Sciatic nerve (tissue), 2 donors: ENCODE measurements at regions of chr18 and their contacts with region 1.

Region 1: DNA sequence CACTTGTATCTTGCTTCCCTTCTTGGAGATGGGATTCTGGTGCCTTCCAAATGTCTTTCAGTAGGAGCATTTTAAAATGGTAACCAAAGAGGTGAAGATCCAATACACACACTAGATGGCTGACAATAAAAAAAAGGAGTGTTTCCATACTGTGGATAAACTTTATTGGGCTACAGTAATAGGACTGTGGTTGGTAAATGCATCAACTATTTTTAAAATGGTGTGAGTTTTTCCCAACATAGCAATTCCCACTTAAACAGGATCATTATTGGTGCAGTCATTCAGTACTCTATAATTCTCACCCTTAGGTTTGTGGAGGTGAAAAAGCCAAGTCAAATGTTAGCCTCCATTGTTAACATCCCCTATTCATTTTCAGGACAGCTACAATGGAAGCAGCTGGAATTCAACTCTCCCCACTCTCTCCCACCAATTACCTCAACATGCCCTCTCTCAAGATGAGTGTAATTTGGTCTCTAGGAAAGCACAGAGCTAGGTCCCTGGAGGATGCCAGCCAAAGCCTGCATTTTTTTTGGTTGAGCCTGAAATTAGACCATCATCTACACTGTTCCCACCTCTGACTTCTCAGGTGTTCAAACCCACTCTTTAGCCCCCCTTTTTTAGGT is 273.3 kb downstream of the TCF4 start:
- DNase-seq: no peak
- ATAC-seq: no peak

Region 2: DNA sequence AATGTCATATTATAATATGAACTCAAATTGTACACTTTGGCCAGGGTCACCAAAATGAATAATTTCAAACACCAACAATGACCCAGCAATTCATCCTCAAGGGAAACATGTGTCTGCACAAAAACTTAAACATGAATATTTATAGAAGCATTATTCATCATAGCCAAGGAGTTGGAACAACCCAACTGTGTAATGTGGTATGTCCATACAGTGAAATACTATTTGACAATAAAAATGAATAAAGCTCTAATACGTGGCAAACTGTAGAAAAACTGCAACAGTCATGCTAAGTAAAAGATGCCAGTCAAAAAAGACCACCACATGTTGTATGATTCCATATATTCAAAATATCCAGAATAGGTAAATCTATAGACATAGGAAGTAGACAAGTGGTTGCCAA is 60.9 kb before region 1 on chr18:
- intact Hi-C with region 1: loop called (anchors 2 kb)
- DNase-seq: no peak
- ATAC-seq: no peak